Adrenal gland (tissue), 19 donors: ENCODE measurements at regions of chr15 and their contacts with region 1.

Region 1: GRCh38 chr15:30985081-30985531 is 6.3 kb downstream of the MTMR10 start:
- DNase-seq: peak; percentile 24 to 71 (median 50)
- H3K4me3 ChIP-seq: peak overlapping the region in 1 of 4 donors; percentile 5
- H3K27ac ChIP-seq: peak overlapping the region in 4 of 5 donors; percentile 12 to 49 (median 30)
- H3K4me1 ChIP-seq: peaks cover 28 to 51% of the 10 kb centered on the region in 2 donors
- H3K27me3 ChIP-seq: no peaks in the 10 kb centered on the region
- CTCF ChIP-seq: no peak
- POLR2A ChIP-seq: no peak

Region 2: DNA sequence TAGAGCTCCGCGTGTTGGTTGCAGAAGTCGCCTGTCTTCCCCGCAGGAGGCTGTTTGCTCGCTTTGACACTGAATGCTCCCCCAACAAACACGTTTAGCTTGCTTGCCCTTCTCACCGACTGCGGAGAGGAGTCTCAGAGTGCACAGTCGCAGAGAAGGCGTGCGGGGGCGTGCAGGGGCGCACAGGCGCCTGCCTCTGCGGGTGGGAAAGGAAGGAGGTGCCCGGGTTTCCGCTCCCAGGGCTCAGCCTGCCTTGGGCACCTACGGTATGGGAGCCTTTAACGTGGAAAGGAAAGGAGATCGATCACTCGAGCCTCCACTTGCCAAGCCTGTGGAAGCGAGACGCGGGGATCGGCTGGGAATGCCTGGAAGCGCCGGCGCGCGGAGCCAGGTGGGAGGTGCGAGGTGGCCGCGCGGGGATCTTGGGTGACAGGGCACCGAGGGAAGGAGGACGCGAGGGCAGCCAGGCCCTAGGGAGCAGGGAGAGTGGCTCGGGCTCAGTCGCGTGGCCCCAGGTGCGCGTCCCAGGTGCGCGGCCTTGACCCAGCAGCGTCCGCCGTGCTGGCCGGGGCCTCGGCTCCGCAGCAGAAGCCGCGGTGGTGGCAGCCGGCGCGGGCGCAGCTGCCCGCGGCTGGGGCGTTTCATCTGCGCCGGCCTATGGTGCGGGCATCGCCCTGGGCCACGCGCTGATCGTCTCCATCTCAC is 81.5 kb before region 1 on chr15 and contains the start of gene FAN1:
- intact Hi-C with region 1: loop called in 1 of 2 experiments (anchors 10 kb)
- DNase-seq: peak; percentile 89 to 92 (median 90)
- H3K4me3 ChIP-seq: peak within 1 kb of the TSS; percentile 74 to 90 (median 88)
- H3K27ac ChIP-seq: peak within 1 kb of the TSS; percentile 5 to 82 (median 57)
- H3K4me1 ChIP-seq: peaks cover 0 to 10% of the 10 kb centered on the region in 2 donors
- H3K27me3 ChIP-seq: no peaks in the 10 kb centered on the region
- CTCF ChIP-seq: no peak
- POLR2A ChIP-seq: peak; percentile 40 to 63
- total RNA-seq, gene FAN1: 5.7 to 30.0 (median 18.1) TPM

Region 3: DNA sequence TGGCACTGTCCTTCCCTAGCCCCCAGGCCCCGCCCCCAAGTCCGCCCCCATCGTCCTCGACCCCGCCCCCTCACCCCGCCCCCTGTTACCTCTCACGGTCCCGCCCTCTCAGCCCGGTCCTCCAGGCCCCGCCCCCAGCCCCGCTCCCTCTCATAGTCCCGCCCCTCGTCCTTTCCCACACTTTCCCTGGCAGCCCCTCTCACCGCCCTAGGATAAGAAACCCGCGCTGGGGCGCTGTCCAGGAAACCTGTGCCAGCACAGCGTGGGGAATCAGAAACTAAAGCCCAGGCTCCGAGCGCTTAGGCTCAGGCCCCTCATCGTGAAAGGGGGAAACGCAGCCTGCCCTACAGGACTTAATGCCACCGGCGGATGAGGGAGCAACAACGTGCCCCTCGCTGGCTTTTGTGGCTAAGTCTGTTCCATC is 95.5 kb after region 1 on chr15:
- intact Hi-C with region 1: no loop called
- DNase-seq: peak; percentile 36 to 65 (median 50)
- H3K4me3 ChIP-seq: peak overlapping the region in 1 of 4 donors; percentile 50
- H3K27ac ChIP-seq: no peak overlapping the region
- H3K4me1 ChIP-seq: no peaks in the 10 kb centered on the region
- H3K27me3 ChIP-seq: no peaks in the 10 kb centered on the region
- CTCF ChIP-seq: no peak
- POLR2A ChIP-seq: no peak